ENCODE measurements at regions of chr19 and their contacts with region 1.

Region 1: GRCh38 chr19:47848823-47849473 is 10.1 kb upstream of the TPRX2 start:
- DNase-seq: no peak
- ATAC-seq: no peak
- H3K4me3 ChIP-seq: peak overlapping the region; percentile 25 to 39
- H3K27ac ChIP-seq: no peak overlapping the region
- H3K4me1 ChIP-seq: peaks cover 7% of the 10 kb centered on the region; the same call in 1 of the 2 replicates
- H3K27me3 ChIP-seq: no peaks in the 10 kb centered on the region
- CTCF ChIP-seq: peak; percentile 84

Region 2: DNA sequence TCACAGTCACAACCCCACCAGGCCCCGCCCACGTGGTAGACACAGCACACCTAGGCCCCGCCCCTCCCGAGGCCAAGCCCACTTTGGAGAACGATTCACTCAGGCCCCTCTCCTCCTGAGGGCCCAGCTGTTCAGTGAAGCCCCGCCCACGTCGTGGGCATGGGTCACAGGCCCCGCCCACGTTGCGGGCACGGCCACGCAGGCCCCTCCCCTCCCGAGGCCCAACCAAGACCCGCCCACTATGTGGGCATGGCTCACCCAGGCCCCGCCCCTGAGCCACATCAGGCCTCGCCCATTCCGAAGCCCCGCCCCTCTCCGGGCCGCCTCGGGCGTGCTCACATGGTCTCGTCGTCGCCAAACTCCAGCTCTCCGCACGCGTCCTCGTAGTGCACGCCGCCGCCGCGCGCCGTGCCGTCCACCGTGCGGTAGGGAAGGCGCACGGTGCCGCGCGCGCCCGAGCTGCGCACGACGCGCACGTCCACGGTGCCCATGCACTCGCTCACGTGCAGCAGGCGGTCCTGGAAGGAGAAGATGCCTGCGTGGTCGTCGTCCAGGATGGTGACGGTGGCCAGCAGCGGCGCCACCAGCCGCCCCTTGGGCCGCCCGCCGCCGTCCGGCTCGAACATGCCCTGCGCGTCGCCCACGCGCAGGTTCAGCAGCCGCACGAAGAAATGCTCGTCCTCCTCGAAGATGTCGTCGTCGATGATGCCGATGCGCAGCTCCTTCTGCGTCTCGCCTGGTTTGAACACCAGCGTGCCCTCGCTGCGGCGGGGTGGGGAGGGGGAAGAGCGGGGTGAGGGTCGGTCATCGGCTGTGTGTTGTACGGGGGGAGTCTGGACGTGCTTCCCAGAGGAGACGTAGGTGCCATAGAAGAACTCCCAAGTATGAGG is 401.2 kb before region 1 on chr19:
- CTCF ChIA-PET with region 1: no interaction called
- POLR2A ChIA-PET with region 1: interaction called, 16 read pairs
- in situ Hi-C with region 1: no loop called
- intact Hi-C with region 1: no loop called
- DNase-seq: no peak
- ATAC-seq: peak; percentile 39
- H3K4me3 ChIP-seq: no peak overlapping the region
- H3K27ac ChIP-seq: no peak overlapping the region
- H3K4me1 ChIP-seq: no peaks in the 10 kb centered on the region
- H3K27me3 ChIP-seq: peaks cover 5% of the 10 kb centered on the region; the same call in 1 of the 2 replicates
- CTCF ChIP-seq: no peak

Measured in Panc1 (cell line).